ENCODE measurements at regions of chr6 and their contacts with region 1.

Region 1: DNA sequence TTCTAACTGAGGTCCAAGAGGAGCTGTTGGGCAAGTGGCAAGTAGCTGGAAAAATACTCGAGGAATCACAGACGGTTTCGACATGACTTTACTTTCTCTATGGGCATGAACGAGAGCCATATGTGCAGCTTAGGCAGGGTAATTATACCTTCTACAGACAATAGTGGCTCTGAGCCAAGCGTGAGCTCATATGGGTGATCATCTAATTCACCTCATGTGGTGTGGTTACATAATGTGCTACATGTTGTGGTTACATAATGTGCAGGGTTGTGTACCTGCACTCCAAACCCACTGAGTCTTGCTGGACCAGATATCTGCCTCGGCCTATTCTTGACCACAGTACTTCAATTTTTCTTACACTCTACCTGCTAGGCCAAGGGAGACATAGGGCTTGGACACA is 771.7 kb upstream of the EYS start:
- DNase-seq: no peak
- CTCF ChIP-seq: no peak

Region 2: DNA sequence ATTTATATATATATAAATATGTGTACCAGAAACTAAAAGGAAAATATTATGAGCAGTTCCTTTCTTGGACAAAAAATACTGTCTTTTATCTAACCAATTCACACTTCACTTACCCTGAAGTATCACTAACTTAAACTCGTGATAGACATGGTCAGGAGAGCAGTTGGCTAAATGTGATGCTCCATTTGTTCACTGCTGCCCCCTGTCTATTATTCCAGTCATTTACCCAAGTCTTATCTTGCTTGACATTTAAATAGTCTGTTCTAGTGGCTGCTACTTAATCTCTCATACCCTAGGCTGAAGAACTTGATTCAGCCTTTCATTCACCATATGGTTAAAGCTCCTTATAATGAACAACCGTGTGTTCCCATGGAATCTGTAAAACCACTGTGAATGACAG is 18.0 kb after region 1 on chr6:
- CTCF ChIA-PET with region 1: interaction called, 11 read pairs
- POLR2A ChIA-PET with region 1: no interaction called
- DNase-seq: no peak
- CTCF ChIP-seq: no peak

Region 3: GRCh38 chr6:66796987-66797386 is 318.3 kb after region 1 on chr6:
- CTCF ChIA-PET with region 1: no interaction called
- POLR2A ChIA-PET with region 1: no interaction called
- DNase-seq: no peak
- CTCF ChIP-seq: no peak